ENCODE measurements at regions of chr11 and their contacts with region 1.

Region 1: DNA sequence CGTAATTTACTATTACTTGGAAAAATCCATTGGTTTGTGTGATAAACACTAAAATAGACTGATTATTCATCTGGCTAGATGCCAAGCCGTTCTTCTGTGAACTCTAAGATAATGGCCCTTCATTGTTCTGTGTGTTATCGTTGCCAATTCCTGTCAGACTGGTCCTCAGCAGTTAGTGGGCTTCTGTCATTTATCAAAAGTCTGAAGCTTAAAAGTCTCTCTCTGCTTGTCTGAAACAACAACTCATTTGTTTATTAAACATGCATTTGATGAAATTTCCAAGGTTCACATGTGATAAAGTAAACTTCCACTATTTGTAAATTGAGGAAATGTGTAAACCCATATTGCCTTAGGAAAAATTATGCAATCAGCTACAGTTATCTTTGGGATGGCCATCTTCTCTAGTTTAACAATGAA is 21.1 kb upstream of the RDX start:
- DNase-seq: no peak
- H3K4me3 ChIP-seq: no peak overlapping the region
- H3K4me3 Mint-ChIP-seq: no peak overlapping the region
- H3K27ac Mint-ChIP-seq: no peak overlapping the region
- H3K4me1 ChIP-seq: peaks cover 32% of the 10 kb centered on the region
- H3K4me1 Mint-ChIP-seq: peaks cover 31% of the 10 kb centered on the region
- H3K27me3 ChIP-seq: no peaks in the 10 kb centered on the region
- H3K27me3 Mint-ChIP-seq: no peaks in the 10 kb centered on the region
- CTCF ChIP-seq: no peak

Region 2: DNA sequence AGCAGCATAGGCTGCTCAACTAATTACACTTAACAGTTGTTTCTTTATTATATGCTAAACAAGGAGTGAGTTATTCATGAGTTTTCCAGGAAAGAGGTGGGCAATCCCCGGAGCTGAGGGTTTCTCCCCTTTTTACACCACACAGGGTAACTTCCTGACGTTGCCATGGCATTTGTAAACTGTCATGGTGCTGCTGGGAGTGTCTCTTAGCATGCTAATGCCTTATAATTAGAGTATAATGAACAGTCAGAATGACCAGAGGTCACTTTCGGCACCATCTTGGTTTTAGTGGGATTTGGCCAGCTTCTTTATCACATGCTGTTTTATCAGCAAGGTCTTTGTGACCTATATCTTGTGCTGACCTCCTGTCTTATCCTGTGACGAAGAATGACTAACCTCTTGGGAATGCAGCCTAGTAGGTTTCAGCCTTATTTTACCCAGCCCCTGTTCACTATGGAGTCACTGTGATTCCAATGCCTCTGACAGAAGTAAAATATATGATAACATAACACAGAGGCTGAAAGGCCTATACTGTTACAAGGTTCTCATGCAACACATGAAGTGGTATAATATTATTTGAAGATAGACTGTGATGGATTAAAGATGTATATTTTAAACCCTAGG is 20.2 kb after region 1 on chr11:
- CTCF ChIA-PET with region 1: no interaction called
- POLR2A ChIA-PET with region 1: no interaction called
- intact Hi-C with region 1: loop called (anchors 2 kb)
- DNase-seq: peak; percentile 93 to 94
- H3K4me3 ChIP-seq: no peak overlapping the region
- H3K4me3 Mint-ChIP-seq: peak overlapping the region; percentile 29
- H3K27ac Mint-ChIP-seq: peak overlapping the region; percentile 95
- H3K4me1 ChIP-seq: peaks cover 35% of the 10 kb centered on the region
- H3K4me1 Mint-ChIP-seq: peaks cover 27% of the 10 kb centered on the region
- H3K27me3 ChIP-seq: no peaks in the 10 kb centered on the region
- H3K27me3 Mint-ChIP-seq: no peaks in the 10 kb centered on the region
- CTCF ChIP-seq: no peak

Region 3: DNA sequence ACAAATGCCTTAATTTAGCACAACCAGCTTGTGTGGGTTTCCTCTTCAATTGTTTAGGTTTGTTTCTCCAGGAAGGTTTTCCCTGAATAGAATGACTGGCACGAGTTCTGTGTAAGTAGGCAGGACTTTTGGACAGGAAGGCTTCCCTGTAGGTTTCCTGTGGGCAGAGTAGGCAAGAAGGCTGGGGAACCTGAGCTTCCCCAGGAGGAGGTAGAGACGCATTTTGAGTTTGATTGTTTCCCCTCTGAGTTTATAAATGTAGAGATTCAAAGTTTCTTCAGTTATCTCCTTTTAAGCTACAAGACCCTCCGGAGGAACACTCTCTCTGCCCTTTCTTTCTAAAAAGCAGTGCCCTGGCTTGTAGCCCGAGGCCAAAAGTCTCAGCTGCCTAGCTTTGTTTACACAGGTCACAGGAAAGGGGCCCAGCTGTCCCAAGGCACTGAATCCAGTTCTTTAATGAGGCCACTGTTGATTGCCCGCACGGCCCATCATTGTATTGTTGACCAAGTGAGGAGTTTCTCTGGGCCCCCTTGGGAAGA is 45.5 kb after region 1 on chr11:
- CTCF ChIA-PET with region 1: interaction called, 4 read pairs
- POLR2A ChIA-PET with region 1: interaction called, 15 read pairs
- intact Hi-C with region 1: no loop called
- DNase-seq: peak; percentile 78 to 87
- H3K4me3 ChIP-seq: no peak overlapping the region
- H3K4me3 Mint-ChIP-seq: peak overlapping the region; percentile 61
- H3K27ac Mint-ChIP-seq: peak overlapping the region; percentile 91
- H3K4me1 ChIP-seq: peaks cover 38% of the 10 kb centered on the region
- H3K4me1 Mint-ChIP-seq: peaks cover 58% of the 10 kb centered on the region
- H3K27me3 ChIP-seq: no peaks in the 10 kb centered on the region
- H3K27me3 Mint-ChIP-seq: no peaks in the 10 kb centered on the region
- CTCF ChIP-seq: no peak

Measured in Caco-2 (cell line).